Head of caudate nucleus (tissue), 42 donors: ENCODE measurements at regions of chr12 and their contacts with region 1.

Region 1: GRCh38 chr12:122851820-122852219 is 16.6 kb downstream of the HIP1R start:
- DNase-seq: peak in 10 of 42 donors; percentile 24 to 80 (median 50)

Region 2: DNA sequence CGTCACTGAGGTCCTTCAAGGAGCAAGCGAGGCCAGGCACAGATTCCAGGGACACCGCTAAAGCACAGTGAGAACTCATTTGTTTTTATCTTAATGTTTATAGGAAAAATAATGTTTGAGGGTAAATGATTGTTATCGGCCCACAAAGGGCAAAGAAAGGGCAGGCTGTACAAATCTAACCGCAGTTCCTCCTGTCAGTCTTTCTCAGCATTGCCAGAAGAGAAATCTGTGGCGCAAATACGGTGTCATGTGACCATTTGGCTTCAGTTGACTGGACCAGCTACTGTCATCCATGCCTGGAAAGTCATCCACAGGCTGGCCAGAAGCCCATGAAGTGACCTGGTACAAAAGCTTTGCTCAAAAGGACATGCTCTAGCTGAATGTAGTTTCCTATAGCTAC is 192.3 kb before region 1 on chr12:
- intact Hi-C with region 1: no loop called
- DNase-seq: no peak

Region 3: GRCh38 chr12:122793685-122794106 is 58.1 kb before region 1 on chr12:
- intact Hi-C with region 1: loop called (anchors 10 kb)
- DNase-seq: peak in 12 of 42 donors; percentile 7 to 66 (median 24)